Body of pancreas (tissue), 4 donors: ENCODE measurements at regions of chr3 and their contacts with region 1.

Region 1: DNA sequence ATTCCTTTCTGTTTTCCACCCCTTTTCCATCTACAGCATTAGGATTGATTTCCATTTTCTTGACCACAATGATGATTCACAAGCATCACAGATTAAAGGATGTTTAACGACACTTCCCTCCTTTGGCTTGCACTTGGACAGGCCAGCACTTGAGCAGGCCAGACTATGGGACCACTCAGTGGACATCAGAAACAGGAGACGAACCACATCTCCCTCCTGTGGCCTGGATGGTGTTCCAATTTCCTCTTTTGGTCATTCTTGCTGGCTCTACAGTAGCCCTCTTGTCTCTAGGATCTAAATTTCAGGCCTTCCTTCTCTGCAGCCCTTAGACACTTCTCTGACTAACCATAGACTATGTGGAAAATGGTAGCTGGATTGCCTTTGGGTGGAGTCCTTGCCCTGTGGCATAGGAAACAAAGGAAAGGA is 78.8 kb upstream of the BOC start:
- DNase-seq: no peak
- ATAC-seq: no peak
- H3K4me3 ChIP-seq: no peak overlapping the region
- H3K27ac ChIP-seq: no peak overlapping the region
- H3K4me1 ChIP-seq: no peaks in the 10 kb centered on the region
- H3K27me3 ChIP-seq: no peaks in the 10 kb centered on the region
- CTCF ChIP-seq: no peak
- POLR2A ChIP-seq: no peak

Region 2: DNA sequence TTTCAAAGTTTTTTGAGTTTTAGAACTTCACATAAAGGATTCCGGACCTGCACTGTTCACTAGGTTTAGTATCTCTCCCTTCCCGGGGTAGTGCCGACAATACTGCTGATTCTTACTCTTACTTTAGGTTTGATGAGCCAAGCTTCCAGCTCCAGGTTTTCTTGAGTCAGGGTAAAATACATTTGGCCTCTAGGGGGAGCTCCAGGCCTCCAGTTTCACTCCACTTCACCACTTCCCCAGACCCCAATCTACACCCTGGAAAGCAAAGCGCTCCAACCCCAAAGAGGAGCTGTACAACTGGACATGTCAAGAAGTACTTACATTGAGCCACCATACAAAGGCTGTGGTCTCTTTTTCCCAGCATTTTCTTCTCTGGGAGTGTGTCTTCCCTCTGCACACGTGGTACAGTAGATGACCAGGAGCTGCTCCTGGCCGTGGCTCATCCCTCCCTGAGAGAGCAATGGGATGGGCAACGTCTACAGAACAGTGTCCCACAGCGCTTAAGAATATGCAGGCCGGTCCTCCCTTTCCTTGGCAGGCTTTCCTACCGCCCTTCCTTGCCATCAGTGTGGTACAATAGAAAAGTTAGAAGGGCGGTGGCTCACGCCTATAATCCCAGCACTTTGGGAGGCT is 397.8 kb before region 1 on chr3:
- intact Hi-C with region 1: no loop called
- DNase-seq: peak; percentile 51 to 66 (median 58)
- ATAC-seq: no peak
- H3K4me3 ChIP-seq: no peak overlapping the region
- H3K27ac ChIP-seq: no peak overlapping the region
- H3K4me1 ChIP-seq: no peaks in the 10 kb centered on the region
- H3K27me3 ChIP-seq: no peaks in the 10 kb centered on the region
- CTCF ChIP-seq: peak; percentile 44 to 68 (median 59)
- POLR2A ChIP-seq: no peak

Region 3: GRCh38 chr3:112973325-112974177 is 159.0 kb before region 1 on chr3:
- intact Hi-C with region 1: no loop called
- DNase-seq: no peak
- ATAC-seq: no peak
- H3K4me3 ChIP-seq: no peak overlapping the region
- H3K27ac ChIP-seq: no peak overlapping the region
- H3K4me1 ChIP-seq: no peaks in the 10 kb centered on the region
- H3K27me3 ChIP-seq: no peaks in the 10 kb centered on the region
- CTCF ChIP-seq: no peak
- POLR2A ChIP-seq: no peak

Region 4: DNA sequence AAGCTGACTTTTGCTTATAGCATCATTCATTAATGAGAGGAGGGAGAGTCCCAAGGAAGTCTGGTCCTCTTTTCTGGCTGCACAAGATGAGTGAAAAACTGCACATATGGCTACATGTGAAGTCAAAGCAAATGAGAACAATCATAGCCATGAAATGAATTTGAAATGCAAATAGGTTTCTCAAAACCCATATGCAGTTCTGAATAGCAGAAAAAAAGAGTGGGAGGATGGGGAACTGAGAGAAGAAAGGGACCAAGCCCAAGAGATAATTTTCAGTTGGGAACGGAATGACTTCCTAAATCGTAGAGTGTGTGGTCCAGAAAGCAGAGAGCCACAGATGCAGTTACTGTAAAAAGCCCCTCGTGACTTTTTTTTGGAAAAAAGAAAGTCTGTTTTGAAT is 75.5 kb before region 1 on chr3:
- intact Hi-C with region 1: loop called (anchors 5 kb)
- DNase-seq: no peak
- ATAC-seq: no peak
- H3K4me3 ChIP-seq: no peak overlapping the region
- H3K27ac ChIP-seq: no peak overlapping the region
- H3K4me1 ChIP-seq: no peaks in the 10 kb centered on the region
- H3K27me3 ChIP-seq: no peaks in the 10 kb centered on the region
- CTCF ChIP-seq: no peak
- POLR2A ChIP-seq: no peak

Region 5: GRCh38 chr3:113291572-113291971 is 159.0 kb after region 1 on chr3:
- intact Hi-C with region 1: loop called (anchors 5 kb)
- DNase-seq: no peak
- ATAC-seq: no peak
- H3K4me3 ChIP-seq: no peak overlapping the region
- H3K27ac ChIP-seq: no peak overlapping the region
- H3K4me1 ChIP-seq: peaks cover 6% of the 10 kb centered on the region
- H3K27me3 ChIP-seq: no peaks in the 10 kb centered on the region
- CTCF ChIP-seq: no peak
- POLR2A ChIP-seq: no peak